ENCODE measurements at regions of chr17 and their contacts with region 1.

Region 1: GRCh38 chr17:17141860-17142552 is 64.1 kb downstream of the PLD6 start:
- DNase-seq: no peak
- H3K4me3 ChIP-seq: no peak overlapping the region
- CTCF ChIP-seq: peak in 1 of 3 donors; percentile 48
- POLR2A ChIP-seq: no peak

Region 2: GRCh38 chr17:16926571-16927451 is 215.2 kb before region 1 on chr17:
- intact Hi-C with region 1: no loop called
- DNase-seq: peak in 1 of 2 donors; percentile 74
- H3K4me3 ChIP-seq: no peak overlapping the region
- CTCF ChIP-seq: no peak
- POLR2A ChIP-seq: no peak

Region 3: DNA sequence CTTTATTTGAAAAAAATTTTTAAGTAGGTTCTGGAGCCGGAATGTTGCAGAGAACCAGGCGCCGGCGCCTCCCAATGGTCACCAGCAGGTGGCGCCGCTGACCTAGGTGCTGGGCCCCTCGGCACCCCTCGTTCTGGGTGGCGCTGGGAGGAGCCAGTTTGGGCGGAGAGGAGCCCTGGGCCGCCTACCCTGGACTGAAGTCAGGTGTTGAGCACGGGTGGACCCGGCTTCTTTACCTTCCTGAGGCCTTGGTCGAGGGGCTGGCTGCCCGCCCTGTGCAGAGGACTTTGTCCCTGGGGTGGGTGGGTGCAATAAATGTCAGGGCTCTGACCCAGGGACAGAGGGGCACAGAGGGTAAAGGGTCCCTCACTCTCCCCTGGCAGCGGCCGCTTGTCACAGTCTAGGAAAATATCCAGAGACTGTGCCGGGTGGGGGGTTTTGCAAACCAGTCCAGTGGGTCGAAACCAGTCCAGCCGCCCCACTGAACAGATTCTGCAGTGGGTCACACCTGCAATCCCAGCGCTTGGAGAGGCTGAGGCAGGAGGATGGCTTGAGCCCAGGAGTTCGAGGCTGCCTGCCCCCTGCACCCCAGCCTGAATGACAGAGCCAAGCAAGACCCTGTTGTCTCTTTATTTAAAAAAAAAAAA is 140.0 kb before region 1 on chr17:
- intact Hi-C with region 1: loop called (anchors 10 kb)
- DNase-seq: peak; percentile 56 to 96
- H3K4me3 ChIP-seq: no peak overlapping the region
- CTCF ChIP-seq: peak in 1 of 3 donors; percentile 93
- POLR2A ChIP-seq: no peak

Region 4: GRCh38 chr17:17313350-17313991 is 171.5 kb after region 1 on chr17:
- intact Hi-C with region 1: loop called (anchors 5 kb)
- DNase-seq: no peak
- H3K4me3 ChIP-seq: no peak overlapping the region
- CTCF ChIP-seq: no peak
- POLR2A ChIP-seq: no peak